Transverse colon (tissue), 4 donors: ENCODE measurements at regions of chr2 and their contacts with region 1.

Region 1: GRCh38 chr2:150147889-150148683 is 339.4 kb downstream of the RND3 start:
- DNase-seq: no peak
- H3K4me3 ChIP-seq: no peak overlapping the region
- H3K27ac ChIP-seq: no peak overlapping the region
- H3K4me1 ChIP-seq: peaks cover 0 to 16% (median 4%) of the 10 kb centered on the region in 4 donors
- H3K27me3 ChIP-seq: no peaks in the 10 kb centered on the region
- CTCF ChIP-seq: no peak
- EP300 ChIP-seq: no peak
- POLR2A ChIP-seq: no peak

Region 2: GRCh38 chr2:150107816-150108215 is 40.3 kb before region 1 on chr2:
- in situ Hi-C with region 1: no loop called
- intact Hi-C with region 1: loop called (anchors 1 kb)
- DNase-seq: no peak
- H3K4me3 ChIP-seq: no peak overlapping the region
- H3K27ac ChIP-seq: no peak overlapping the region
- H3K4me1 ChIP-seq: no peaks in the 10 kb centered on the region
- H3K27me3 ChIP-seq: no peaks in the 10 kb centered on the region
- CTCF ChIP-seq: no peak
- EP300 ChIP-seq: no peak
- POLR2A ChIP-seq: no peak